ENCODE measurements at regions of chr5 and their contacts with region 1.

Region 1: DNA sequence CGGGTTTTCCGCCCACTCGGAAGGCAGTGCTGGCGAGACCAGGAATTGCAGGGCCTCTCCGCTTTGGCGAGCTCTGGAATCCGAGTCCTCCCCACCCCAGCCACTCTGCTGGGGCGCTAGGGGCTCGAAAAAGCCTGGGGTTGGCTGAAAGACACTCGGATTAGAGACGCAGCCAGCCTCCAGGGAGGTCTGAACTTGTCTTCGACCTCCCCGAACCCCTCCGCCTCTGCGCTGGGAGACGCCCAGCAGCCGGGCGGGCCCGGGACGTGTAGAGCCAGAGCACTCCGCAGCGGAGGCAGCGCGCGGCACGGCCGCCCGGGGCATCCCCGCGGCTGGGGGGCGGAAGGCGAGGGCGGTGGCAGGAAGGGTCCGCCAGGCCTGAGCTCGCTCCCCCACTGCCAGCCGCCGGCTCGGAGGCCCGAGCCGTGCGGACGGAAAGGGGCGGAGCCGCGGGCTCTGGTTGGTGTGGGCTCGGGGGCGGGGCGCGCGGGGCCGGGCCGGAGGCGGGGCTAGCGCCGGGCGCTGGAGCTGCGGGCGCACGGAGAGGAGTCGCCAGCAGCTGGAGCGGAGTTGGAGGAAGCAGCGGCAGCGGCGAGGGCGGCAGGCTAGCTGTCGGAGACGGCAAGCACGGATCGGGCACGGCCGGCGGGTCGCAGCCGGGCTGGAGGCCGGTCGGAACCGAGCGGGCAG is at the start of gene PIK3R1:
- DNase-seq: peak; percentile 84 to 96 (median 91)
- ATAC-seq: peak; percentile 78
- H3K4me3 ChIP-seq: peak within 1 kb of the TSS; percentile 81 to 93
- H3K4me3 Mint-ChIP-seq: peak within 1 kb of the TSS; percentile 87
- H3K27ac ChIP-seq: peak within 1 kb of the TSS; percentile 83 to 94
- H3K27ac Mint-ChIP-seq: peak within 1 kb of the TSS; percentile 96
- H3K4me1 ChIP-seq: peaks cover 35% of the 10 kb centered on the region
- H3K4me1 Mint-ChIP-seq: peaks cover 46% of the 10 kb centered on the region
- H3K27me3 ChIP-seq: no peaks in the 10 kb centered on the region
- H3K27me3 Mint-ChIP-seq: no peaks in the 10 kb centered on the region
- CTCF ChIP-seq: no peak
- total RNA-seq, gene PIK3R1: 461 to 470 TPM

Region 2: GRCh38 chr5:67165526-67166459 is 1049.6 kb before region 1 on chr5:
- CTCF ChIA-PET with region 1: interaction called, 3 read pairs
- POLR2A ChIA-PET with region 1: interaction called, 4 read pairs
- intact Hi-C with region 1: loop called in 1 of 2 experiments (anchors 5 kb)
- DNase-seq: peak; percentile 65 to 89 (median 82)
- ATAC-seq: peak; percentile 78
- H3K4me3 ChIP-seq: peak overlapping the region; percentile 52 to 54
- H3K4me3 Mint-ChIP-seq: peak overlapping the region; percentile 84
- H3K27ac ChIP-seq: peak overlapping the region; percentile 65 to 85
- H3K27ac Mint-ChIP-seq: peak overlapping the region; percentile 97
- H3K4me1 ChIP-seq: peaks cover 65% of the 10 kb centered on the region
- H3K4me1 Mint-ChIP-seq: peaks cover 68% of the 10 kb centered on the region
- H3K27me3 ChIP-seq: no peaks in the 10 kb centered on the region
- H3K27me3 Mint-ChIP-seq: no peaks in the 10 kb centered on the region
- CTCF ChIP-seq: peak; percentile 73

Region 3: DNA sequence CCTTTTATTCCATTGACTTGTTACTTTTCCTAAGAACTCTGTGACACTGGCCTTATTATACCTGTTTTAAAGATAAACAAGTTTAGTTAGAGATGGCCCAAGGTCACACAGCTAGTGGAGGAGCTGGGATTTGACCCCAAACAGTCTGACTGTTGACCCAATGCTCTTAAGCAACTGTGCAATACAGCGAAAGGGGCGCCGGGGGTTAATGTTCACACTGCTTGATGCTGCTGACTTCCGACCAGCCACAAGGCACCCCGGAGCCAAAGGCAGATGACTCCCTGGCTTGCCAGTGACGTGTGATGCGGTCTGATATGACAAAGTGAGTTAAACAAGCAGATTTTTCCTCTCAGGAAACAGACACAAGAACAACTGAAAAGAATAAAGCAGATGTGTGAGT is 24.1 kb after region 1 on chr5:
- CTCF ChIA-PET with region 1: interaction called, 8 read pairs
- POLR2A ChIA-PET with region 1: interaction called, 59 read pairs
- intact Hi-C with region 1: loop called (anchors 1 kb)
- DNase-seq: peak; percentile 62 to 94 (median 83)
- ATAC-seq: peak; percentile 95
- H3K4me3 ChIP-seq: no peak overlapping the region
- H3K4me3 Mint-ChIP-seq: peak overlapping the region; percentile 66
- H3K27ac ChIP-seq: peak overlapping the region; percentile 5 to 78
- H3K27ac Mint-ChIP-seq: peak overlapping the region; percentile 89
- H3K4me1 ChIP-seq: peaks cover 63% of the 10 kb centered on the region
- H3K4me1 Mint-ChIP-seq: peaks cover 86% of the 10 kb centered on the region
- H3K27me3 ChIP-seq: no peaks in the 10 kb centered on the region
- H3K27me3 Mint-ChIP-seq: no peaks in the 10 kb centered on the region
- CTCF ChIP-seq: no peak

Region 4: DNA sequence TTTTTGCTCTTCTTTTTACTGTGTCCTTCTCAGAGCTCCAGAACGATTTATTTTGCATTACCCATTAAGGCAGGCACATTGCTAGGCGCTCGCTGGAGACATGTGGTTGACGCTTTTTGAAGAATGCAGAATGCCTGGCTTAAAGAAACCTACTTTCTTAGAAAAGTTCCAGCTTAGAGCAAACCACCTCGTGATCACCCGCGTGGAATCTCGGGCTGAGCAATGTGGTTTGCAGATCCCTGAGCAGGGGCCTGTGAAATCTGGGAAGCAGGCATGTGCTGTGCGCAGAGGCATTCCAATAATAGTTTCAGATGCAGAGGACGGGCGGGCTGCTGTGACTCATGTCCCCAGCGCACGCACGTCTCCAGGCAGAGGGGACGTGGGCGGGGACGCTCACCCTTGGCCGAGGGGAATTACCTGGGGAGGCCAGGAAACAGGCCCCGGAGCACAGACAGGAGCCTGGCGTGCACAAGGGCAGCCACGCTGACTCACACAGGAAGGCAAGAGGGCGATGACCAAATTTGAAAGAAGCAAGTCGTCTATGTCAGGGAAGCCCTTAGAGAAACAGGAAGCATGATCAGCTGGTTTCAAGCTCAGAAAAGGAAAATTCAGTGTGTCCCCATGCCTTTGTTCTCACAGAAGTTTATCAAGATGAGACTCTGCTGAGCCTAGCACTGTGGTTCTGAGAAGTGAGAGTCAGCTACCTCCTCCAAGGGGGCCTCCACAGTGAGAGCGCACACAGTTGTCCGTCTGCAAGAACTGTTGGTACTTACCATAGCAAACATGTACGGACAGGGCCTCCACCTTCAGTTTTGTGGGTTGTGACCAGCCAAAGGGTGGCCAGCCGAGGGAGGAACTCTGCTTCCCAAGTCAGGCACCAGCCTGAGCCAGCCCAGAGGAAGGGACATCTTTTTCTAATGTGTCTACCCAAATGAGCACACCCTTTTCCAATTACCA is 218.8 kb after region 1 on chr5:
- CTCF ChIA-PET with region 1: no interaction called
- POLR2A ChIA-PET with region 1: no interaction called
- intact Hi-C with region 1: loop called (anchors 5 to 10 kb)
- DNase-seq: peak; percentile 54 to 95 (median 87)
- ATAC-seq: peak; percentile 96
- H3K4me3 ChIP-seq: peak overlapping the region; percentile 16
- H3K4me3 Mint-ChIP-seq: peak overlapping the region; percentile 73
- H3K27ac ChIP-seq: peak overlapping the region in 1 of 2 experiments; percentile 79
- H3K27ac Mint-ChIP-seq: peak overlapping the region; percentile 84
- H3K4me1 ChIP-seq: peaks cover 20% of the 10 kb centered on the region
- H3K4me1 Mint-ChIP-seq: peaks cover 36% of the 10 kb centered on the region
- H3K27me3 ChIP-seq: no peaks in the 10 kb centered on the region
- H3K27me3 Mint-ChIP-seq: no peaks in the 10 kb centered on the region
- CTCF ChIP-seq: no peak